AG04449 (cell line): ENCODE measurements at regions of chr11 and their contacts with region 1.

Region 1: DNA sequence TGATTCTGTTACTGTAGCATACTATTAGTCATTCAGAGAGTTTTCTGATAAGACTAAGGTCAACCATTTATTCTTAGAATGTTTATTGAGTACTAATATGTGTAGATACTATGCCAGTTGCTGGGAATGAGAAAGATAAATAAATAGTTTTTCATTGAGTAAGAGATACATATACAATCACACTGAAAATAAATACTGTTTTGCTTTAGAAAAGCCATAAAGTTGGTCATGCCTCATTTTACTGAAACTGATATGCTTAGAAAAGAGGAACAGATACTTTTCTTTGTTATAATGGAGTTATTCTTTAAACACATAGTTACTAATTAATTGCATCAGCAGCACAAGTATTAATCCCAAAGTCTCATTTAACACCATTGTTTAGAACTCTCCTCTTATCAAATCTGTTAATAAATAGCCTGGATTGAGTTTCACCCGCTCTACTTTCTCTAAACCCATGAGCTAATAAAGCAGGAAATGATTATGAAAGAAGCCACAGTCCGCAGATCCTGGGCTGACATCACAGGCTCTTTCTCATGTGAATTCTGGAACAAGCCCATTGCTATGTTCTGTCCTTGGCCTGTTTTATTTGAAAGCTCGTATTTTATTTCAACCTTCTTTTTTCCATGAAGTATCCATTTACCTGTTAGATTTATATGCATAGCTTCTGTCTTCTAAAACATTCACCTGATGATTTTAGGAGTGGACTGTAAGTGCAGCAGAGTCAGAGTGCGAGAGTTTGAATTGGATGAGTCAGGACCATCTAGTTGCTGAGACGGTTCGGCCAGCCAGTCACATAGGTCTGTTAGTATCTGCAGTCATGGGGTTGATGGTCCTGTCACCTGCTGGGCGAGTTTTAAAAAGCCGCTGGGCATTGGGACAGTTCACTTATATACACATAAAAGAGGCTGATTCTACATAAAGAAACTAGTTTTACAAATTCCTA is 35.5 kb downstream of the PIWIL4 start:
- DNase-seq: peak; percentile 45
- H3K4me3 ChIP-seq: no peak overlapping the region
- CTCF ChIP-seq: peak; percentile 58

Region 2: GRCh38 chr11:94511932-94512781 is 90.5 kb before region 1 on chr11 and contains the start of gene C11orf97:
- CTCF ChIA-PET with region 1: interaction called, 270 read pairs
- POLR2A ChIA-PET with region 1: no interaction called
- DNase-seq: no peak
- H3K4me3 ChIP-seq: peak within 1 kb of the TSS; percentile 62
- CTCF ChIP-seq: no peak

Region 3: GRCh38 chr11:94537031-94537600 is 65.6 kb before region 1 on chr11:
- CTCF ChIA-PET with region 1: interaction called, 24 read pairs
- POLR2A ChIA-PET with region 1: no interaction called
- DNase-seq: peak; percentile 70
- H3K4me3 ChIP-seq: no peak overlapping the region
- CTCF ChIP-seq: no peak

Region 4: GRCh38 chr11:94553938-94554337 is 48.8 kb before region 1 on chr11:
- CTCF ChIA-PET with region 1: interaction called, 14 read pairs
- POLR2A ChIA-PET with region 1: no interaction called
- DNase-seq: no peak
- H3K4me3 ChIP-seq: no peak overlapping the region
- CTCF ChIP-seq: no peak

Region 5: DNA sequence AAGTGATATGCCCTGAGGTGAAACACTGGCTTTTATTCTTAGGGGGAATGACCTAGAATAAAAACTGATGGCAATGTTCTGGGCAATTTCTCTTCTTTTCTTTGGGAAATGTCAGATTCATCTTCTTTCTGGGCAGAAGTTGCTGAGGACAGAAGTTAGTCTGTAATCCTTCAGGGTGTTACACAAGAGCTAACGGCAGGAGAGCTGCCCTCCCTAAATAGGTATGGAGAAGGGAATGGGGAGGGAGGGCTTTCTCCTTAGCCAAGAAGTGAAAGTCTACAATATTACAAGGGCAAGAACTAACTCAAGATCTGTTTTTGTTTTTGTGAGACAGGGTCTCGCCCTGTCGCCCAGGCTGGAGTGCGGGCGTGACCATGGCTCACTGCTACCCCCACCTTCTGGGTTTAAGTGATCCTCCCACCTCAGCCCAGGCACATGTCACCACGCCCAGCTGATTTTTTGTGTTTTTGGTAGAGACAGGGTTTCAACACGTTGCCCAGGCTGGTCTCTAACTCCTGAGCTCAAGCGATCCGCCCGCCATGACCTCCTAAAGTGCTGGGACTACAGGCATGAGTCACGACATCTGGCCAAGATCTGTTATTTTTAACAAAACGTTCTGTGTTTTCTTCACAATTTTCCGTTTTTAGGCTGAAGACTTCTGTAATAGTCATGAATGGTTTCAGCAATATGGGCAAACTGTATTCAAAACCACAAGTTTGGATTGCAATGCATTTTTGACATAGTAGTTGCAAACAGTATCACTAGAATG is 28.3 kb before region 1 on chr11:
- CTCF ChIA-PET with region 1: interaction called, 13 read pairs
- POLR2A ChIA-PET with region 1: no interaction called
- DNase-seq: peak; percentile 59
- H3K4me3 ChIP-seq: no peak overlapping the region
- CTCF ChIP-seq: no peak

Region 6: DNA sequence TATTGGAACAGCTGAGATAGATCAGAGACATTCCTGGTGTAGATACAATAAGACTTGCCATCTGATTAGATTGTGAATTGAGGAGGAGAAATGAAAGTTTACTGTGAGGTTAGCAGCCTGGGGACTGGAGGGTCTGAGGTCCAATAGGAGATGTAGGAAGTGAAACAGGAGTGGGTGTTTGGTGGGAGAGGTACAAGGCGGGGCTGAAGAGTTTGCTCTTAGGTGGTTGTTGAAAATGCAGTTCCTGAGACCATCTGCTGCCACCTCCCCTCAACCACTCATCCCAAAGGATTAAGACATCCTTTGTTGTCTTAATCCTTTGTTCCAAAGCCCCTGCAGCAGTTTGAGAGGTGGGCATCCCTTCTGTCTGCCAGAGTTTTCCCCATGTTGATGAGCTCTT is 20.8 kb before region 1 on chr11:
- CTCF ChIA-PET with region 1: interaction called, 87 read pairs
- POLR2A ChIA-PET with region 1: no interaction called
- DNase-seq: no peak
- H3K4me3 ChIP-seq: no peak overlapping the region
- CTCF ChIP-seq: no peak

Region 7: DNA sequence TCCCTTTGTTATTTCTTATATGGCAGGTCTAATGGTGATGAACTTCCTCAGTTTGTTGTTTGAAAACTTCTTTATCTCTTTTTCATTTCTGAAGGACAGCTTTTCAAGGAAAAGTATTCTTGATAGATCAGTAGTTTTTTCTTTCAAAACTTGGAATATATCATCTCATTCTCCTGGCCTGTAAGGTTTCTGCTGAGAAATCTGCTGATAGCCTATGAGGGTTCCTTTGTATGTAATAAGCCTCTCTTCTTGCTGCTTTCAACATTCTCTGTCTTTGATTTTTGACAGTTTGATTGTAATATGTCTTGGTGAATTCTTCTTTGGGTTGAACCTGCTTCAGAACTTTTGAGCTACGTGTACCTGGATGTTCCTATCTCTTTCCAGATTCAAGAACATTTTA is 10.4 kb after region 1 on chr11:
- CTCF ChIA-PET with region 1: interaction called, 69 read pairs
- POLR2A ChIA-PET with region 1: no interaction called
- DNase-seq: no peak
- H3K4me3 ChIP-seq: no peak overlapping the region
- CTCF ChIP-seq: no peak